ENCODE measurements at regions of chr14 and their contacts with region 1.

Region 1: DNA sequence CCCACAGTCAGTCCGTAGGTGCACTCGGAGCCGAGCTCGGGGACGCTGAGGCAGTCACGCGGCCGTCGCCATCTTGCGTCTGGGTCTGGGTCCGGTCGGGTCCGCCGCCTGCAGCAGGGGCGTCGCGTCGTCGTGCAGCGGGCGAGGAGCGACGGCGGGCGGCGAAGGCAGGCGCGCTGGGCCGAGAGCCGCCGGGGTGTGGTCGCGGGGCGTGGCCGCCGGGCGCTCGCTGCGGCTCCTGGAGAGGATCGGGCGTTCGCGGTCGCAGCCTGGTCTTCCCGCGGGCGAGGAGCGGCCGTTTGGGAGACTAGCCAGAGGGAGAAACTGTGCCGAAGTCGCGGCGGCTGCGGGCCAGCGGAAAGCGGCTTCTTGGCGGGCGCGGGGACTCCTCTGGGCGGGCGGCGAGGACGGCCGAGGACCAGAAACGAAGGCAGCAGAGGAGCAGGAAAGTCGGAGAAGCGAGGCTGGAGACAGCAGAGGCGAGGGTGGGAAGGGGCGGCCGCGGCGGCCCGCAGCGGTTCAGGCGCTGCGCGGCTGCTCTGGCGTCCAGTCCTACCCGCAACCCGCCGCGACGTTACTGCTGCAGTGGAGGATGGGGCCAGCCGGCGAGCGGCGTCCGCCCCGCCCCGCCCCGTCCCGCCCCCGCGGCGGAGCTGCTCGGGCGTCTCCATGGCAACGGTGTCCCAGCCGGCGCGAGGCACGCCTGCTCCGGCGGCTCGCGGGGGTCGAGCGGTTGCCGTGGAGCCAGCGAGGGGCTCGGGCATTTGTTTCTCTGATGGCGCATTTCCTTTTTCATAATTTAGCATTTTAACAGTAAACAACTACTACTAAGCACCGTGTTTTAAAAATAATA is at the start of gene PNMA1:
- DNase-seq: no peak
- ATAC-seq: peak; percentile 89
- H3K4me3 ChIP-seq: peak within 1 kb of the TSS; percentile 89
- H3K27ac ChIP-seq: peak within 1 kb of the TSS; percentile 63
- H3K4me1 ChIP-seq: peaks cover 4% of the 10 kb centered on the region
- H3K27me3 ChIP-seq: no peaks in the 10 kb centered on the region
- CTCF ChIP-seq: no peak
- EP300 ChIP-seq: no peak
- POLR2A ChIP-seq: peak; percentile 86
- RAD21 ChIP-seq: no peak
- polyA plus RNA-seq, gene PNMA1: 1.8 to 6.5 TPM

Region 2: GRCh38 chr14:73568381-73568781 is 145.6 kb before region 1 on chr14:
- CTCF ChIA-PET with region 1: interaction called, 11 read pairs
- POLR2A ChIA-PET with region 1: no interaction called
- RAD21 ChIA-PET with region 1: no interaction called
- SMC1A ChIA-PET with region 1: no interaction called
- in situ Hi-C with region 1: no loop called
- intact Hi-C with region 1: no loop called
- DNase-seq: no peak
- ATAC-seq: no peak
- H3K4me3 ChIP-seq: peak overlapping the region; percentile 60
- H3K27ac ChIP-seq: peak overlapping the region; percentile 68
- H3K4me1 ChIP-seq: peaks cover 7% of the 10 kb centered on the region
- H3K27me3 ChIP-seq: no peaks in the 10 kb centered on the region
- CTCF ChIP-seq: no peak
- EP300 ChIP-seq: no peak
- POLR2A ChIP-seq: no peak
- RAD21 ChIP-seq: no peak

Region 3: DNA sequence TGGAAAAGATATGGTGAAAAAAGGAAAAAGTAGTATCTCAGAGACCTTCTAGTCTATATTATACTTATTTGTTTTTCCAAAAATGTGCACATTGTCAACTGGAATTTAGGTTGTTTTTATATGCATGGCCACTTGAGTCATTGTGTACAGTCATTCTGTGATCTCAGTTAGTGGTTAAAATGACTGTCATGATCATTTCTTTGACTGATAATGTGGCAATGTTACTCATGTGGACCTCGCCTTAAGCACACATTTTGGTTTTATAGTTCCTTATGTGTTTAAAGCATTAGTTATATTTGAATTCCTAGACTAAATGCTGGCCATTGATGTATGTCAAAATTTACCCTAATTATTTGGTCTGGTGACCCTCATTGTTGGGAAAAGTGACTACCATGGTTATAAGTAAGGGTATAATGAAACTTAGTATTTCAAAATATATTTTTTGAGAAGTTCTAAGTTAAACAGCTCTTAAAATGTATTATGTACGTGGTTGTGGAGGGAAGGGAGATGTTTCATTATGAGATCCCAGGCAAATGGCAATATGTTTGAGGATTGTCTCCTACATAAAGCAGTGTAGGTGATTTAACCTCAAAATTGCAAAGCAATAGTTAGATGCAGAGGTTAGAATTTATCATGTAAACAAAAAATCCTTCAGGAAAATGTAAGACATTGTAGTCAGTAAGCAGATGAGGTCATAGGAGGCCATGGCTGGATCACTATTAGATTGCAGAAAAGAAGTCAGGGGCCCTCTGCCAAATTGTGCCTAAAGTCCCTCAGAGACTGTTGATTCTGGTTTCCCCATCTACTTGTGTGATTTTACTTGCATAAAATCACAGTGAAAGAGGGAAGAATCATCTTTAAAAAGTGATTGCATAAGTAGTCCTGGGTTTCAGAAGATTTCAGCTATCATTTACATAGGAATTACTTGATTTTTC is 17.3 kb before region 1 on chr14:
- CTCF ChIA-PET with region 1: interaction called, 3 read pairs
- POLR2A ChIA-PET with region 1: interaction called, 3 read pairs
- RAD21 ChIA-PET with region 1: interaction called, 5 read pairs
- SMC1A ChIA-PET with region 1: interaction called, 16 read pairs
- in situ Hi-C with region 1: no loop called
- intact Hi-C with region 1: no loop called
- DNase-seq: peak; percentile 88
- ATAC-seq: peak; percentile 92
- H3K4me3 ChIP-seq: peak overlapping the region; percentile 59; the same call in 1 of the 2 replicates
- H3K27ac ChIP-seq: peak overlapping the region; percentile 97
- H3K4me1 ChIP-seq: peaks cover 21% of the 10 kb centered on the region
- H3K27me3 ChIP-seq: no peaks in the 10 kb centered on the region
- CTCF ChIP-seq: no peak
- EP300 ChIP-seq: peak; percentile 72 to 97
- POLR2A ChIP-seq: no peak
- RAD21 ChIP-seq: no peak

Region 4: GRCh38 chr14:74302634-74303577 is 588.9 kb after region 1 on chr14 and contains the start of gene ABCD4:
- CTCF ChIA-PET with region 1: no interaction called
- POLR2A ChIA-PET with region 1: no interaction called
- RAD21 ChIA-PET with region 1: no interaction called
- SMC1A ChIA-PET with region 1: no interaction called
- in situ Hi-C with region 1: no loop called
- intact Hi-C with region 1: no loop called
- DNase-seq: peak; percentile 59
- ATAC-seq: peak; percentile 99
- H3K4me3 ChIP-seq: peak within 1 kb of the TSS; percentile 93
- H3K27ac ChIP-seq: peak within 1 kb of the TSS; percentile 61
- H3K4me1 ChIP-seq: no peaks in the 10 kb centered on the region
- H3K27me3 ChIP-seq: no peaks in the 10 kb centered on the region
- CTCF ChIP-seq: peak; percentile 57 to 74 (median 70)
- EP300 ChIP-seq: no peak
- POLR2A ChIP-seq: peak; percentile 96
- RAD21 ChIP-seq: no peak
- polyA plus RNA-seq, gene ABCD4: 5.7 to 6.2 TPM